Common myeloid progenitor, CD34-positive (primary cell): ENCODE measurements at regions of chr12 and their contacts with region 1.

Region 1: GRCh38 chr12:2395354-2395977 is 342.7 kb downstream of the CACNA1C start:
- DNase-seq: peak; percentile 29 to 61 (median 50)
- H3K4me3 ChIP-seq: no peak overlapping the region
- H3K27ac ChIP-seq: no peak overlapping the region
- H3K4me1 ChIP-seq: peaks cover 0 to 1% (median 0%) of the 10 kb centered on the region in 4 experiments
- H3K27me3 ChIP-seq: no peaks in the 10 kb centered on the region

Region 2: GRCh38 chr12:2354151-2354991 is 41.1 kb before region 1 on chr12:
- CTCF ChIA-PET with region 1: interaction called, 10 read pairs
- POLR2A ChIA-PET with region 1: interaction called, 6 read pairs
- DNase-seq: peak in 2 of 3 donors; percentile 72 to 75
- H3K4me3 ChIP-seq: no peak overlapping the region
- H3K27ac ChIP-seq: no peak overlapping the region
- H3K4me1 ChIP-seq: peaks cover 19 to 76% (median 70%) of the 10 kb centered on the region in 4 experiments
- H3K27me3 ChIP-seq: no peaks in the 10 kb centered on the region

Region 3: DNA sequence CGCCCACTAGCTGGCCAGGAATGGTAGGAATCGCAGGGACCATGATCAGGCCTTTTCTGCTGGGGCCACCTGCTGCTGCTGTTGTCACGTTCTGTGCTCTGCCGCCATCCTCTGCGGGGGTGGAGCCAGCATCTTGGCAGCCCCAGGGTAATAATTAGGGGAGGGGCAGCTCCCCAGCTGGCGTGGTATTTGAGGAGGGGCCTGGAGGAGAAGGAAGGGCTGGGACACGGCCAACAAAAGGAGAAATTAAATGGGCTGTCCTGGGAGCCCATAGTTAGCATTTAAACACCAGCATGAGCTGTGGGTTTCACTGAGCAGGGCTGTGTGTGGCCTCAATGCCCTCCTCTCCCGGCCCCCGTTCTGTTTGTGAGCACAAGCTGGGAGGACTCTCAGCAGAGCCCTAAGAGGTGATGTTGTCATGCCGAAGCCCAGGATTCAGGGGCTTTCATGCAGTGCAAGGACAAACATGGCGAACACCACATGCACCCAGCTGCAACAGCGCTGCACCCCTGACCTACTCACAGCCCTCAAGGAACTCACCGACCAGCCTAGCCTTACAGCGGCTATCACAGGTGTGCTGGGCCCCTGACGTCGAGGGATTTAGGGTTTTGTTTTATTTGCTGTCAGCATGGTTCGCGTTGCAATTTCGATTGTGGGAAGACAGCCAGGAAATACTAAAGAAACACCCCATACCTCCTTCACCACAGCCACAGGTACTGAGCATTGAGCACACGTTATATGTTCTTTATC is 18.4 kb before region 1 on chr12:
- CTCF ChIA-PET with region 1: interaction called, 12 read pairs
- POLR2A ChIA-PET with region 1: no interaction called
- DNase-seq: no peak
- H3K4me3 ChIP-seq: no peak overlapping the region
- H3K27ac ChIP-seq: no peak overlapping the region
- H3K4me1 ChIP-seq: peaks cover 0 to 20% (median 10%) of the 10 kb centered on the region in 4 experiments
- H3K27me3 ChIP-seq: no peaks in the 10 kb centered on the region